ENCODE measurements at regions of chr6 and their contacts with region 1.

Region 1: DNA sequence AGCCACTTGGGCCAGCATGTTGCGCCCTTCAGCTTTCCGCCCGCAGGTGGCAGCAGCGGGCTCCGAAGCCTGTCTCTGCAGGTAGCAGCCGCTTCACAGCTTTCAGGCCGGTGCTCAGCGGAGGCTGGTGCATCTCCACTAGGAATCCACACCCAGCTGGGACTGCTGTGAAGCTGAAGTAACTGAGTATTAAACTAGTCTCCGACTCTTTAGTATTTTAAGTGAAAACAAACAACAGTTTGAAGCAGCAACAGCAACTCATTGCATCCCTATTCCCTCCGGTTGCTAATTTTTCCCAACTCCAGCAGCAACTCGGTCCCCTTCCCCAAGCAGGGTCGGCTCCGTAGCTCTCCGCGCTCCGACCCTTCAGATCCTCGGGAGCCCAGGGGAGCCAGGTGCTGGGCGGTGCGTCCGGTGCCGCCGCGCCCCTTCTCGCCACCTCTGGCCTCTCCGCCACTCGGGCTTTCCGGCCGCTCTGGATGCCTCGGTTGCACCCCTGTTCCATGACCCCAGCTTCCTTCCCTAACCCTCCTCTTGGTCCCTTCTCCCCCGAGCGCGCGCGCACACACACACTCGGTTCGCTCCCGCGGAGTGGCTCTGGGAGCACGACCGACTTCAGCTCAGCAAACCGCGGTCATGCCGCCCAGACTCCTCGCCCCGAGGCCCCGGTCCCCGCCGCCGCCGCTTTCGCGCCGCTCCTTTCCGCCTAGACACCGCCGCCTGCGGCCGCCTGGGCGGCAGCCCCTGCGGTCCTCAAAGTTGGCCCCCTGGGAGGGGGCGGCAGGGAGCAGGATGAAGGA is 768 bp upstream of the NKAIN2 start:
- DNase-seq: peak; percentile 6
- H3K4me3 ChIP-seq: peak overlapping the region; percentile 19
- H3K27me3 ChIP-seq: peaks cover 5% of the 10 kb centered on the region
- CTCF ChIP-seq: peak; percentile 98

Region 2: GRCh38 chr6:123788319-123788718 is 14.6 kb before region 1 on chr6:
- CTCF ChIA-PET with region 1: interaction called, 16 read pairs
- POLR2A ChIA-PET with region 1: no interaction called
- DNase-seq: no peak
- H3K4me3 ChIP-seq: no peak overlapping the region
- H3K27me3 ChIP-seq: no peaks in the 10 kb centered on the region
- CTCF ChIP-seq: no peak

Region 3: DNA sequence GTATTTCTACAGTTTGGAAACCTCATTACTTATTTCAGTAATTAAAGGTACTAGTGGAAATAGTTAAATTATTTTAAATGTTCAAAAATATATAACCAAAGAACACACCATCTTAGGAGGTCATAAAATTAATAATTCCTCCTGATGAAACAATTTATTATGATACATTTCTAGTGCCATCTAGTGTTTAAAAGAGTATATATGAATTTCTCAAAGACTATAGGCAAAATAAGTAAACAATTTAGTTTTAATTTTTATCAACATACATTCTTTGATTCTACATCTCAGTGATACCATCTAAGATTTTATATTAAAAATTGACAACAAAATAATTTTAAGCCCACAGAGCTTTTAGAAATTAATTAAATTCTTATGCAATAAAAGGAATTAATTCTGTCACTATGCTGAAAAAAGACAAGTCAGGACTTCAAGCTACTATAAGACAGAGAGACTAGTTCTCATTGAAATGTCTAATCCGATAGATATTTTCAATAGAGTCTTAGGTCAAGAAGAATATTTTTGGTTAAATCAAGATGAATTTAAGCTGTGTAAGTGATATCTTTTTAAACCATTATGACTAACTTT is 1051.5 kb after region 1 on chr6:
- CTCF ChIA-PET with region 1: interaction called, 14 read pairs
- POLR2A ChIA-PET with region 1: no interaction called
- DNase-seq: no peak
- H3K4me3 ChIP-seq: no peak overlapping the region
- H3K27me3 ChIP-seq: no peaks in the 10 kb centered on the region
- CTCF ChIP-seq: 0 out of 2 replicates have a peak, but pooled peaks have one; percentile 6

Measured in BJ (cell line).